GM12878 (cell line): ENCODE measurements at regions of chr14 and their contacts with region 1.

Region 1: DNA sequence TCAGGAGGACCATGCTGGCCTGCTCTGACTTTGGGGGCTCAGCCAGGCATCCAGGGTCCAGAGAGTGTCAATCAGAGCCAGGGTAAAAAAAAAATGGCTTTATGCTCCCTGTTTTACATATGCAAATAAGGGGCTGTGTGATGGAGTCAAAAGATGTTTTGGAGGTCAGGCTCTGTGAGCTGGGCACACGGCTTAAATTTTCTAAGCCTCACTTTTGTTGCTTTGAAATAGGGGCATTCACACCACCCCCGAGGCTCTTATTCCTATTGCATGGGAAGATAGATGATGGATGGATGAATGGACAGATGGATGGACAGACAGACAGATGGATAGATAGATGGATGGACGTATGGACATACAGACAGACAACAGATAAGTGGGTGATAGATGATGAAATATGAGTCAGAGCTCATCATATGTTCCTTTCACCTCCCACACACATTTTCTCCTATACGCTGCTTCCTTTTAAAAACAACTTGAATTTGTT is 42.7 kb downstream of the RIN3 start:
- DNase-seq: no peak
- ATAC-seq: no peak
- H3K4me3 ChIP-seq: no peak overlapping the region
- H3K27ac ChIP-seq: no peak overlapping the region
- H3K4me1 ChIP-seq: peaks cover 39% of the 10 kb centered on the region
- H3K27me3 ChIP-seq: no peaks in the 10 kb centered on the region
- CTCF ChIP-seq: no peak
- EP300 ChIP-seq: 0 out of 4 replicates have a peak, but pooled peaks of 1 of the 2 experiments have one; percentile 49
- POLR2A ChIP-seq: no peak
- RAD21 ChIP-seq: no peak

Region 2: GRCh38 chr14:92568621-92569479 is 12.6 kb after region 1 on chr14:
- CTCF ChIA-PET with region 1: interaction called, 7 read pairs
- POLR2A ChIA-PET with region 1: interaction called, 7 read pairs
- RAD21 ChIA-PET with region 1: interaction called, 12 read pairs
- SMC1A ChIA-PET with region 1: interaction called, 29 read pairs
- in situ Hi-C with region 1: no loop called
- intact Hi-C with region 1: no loop called
- DNase-seq: peak; percentile 76
- ATAC-seq: peak; percentile 93
- H3K4me3 ChIP-seq: peak overlapping the region; percentile 11; the same call in 1 of the 2 replicates
- H3K27ac ChIP-seq: peak overlapping the region; percentile 88
- H3K4me1 ChIP-seq: peaks cover 31% of the 10 kb centered on the region
- H3K27me3 ChIP-seq: no peaks in the 10 kb centered on the region
- CTCF ChIP-seq: 0 out of 6 replicates have a peak, but pooled peaks of 1 of the 3 experiments have one; percentile 1
- EP300 ChIP-seq: no peak; a peak in 1 of 4 replicates
- POLR2A ChIP-seq: peak; percentile 42; the same call in 1 of the 2 replicates
- RAD21 ChIP-seq: 0 out of 2 replicates have a peak, but pooled peaks have one; percentile 10